HepG2 (cell line): ENCODE measurements at regions of chr3 and their contacts with region 1.

Region 1: GRCh38 chr3:65828706-65829105 is 210.0 kb downstream of the MAGI1 start:
- DNase-seq: no peak
- ATAC-seq: no peak
- H3K4me3 ChIP-seq: no peak overlapping the region
- H3K27ac ChIP-seq: no peak overlapping the region
- H3K4me1 ChIP-seq: peaks cover 23% of the 10 kb centered on the region
- H3K27me3 ChIP-seq: no peaks in the 10 kb centered on the region
- CTCF ChIP-seq: no peak
- EP300 ChIP-seq: no peak
- POLR2A ChIP-seq: no peak
- RAD21 ChIP-seq: no peak

Region 2: GRCh38 chr3:65785065-65785645 is 43.6 kb before region 1 on chr3:
- CTCF ChIA-PET with region 1: no interaction called
- POLR2A ChIA-PET with region 1: no interaction called
- in situ Hi-C with region 1: no loop called
- intact Hi-C with region 1: no loop called
- DNase-seq: peak; percentile 41
- ATAC-seq: peak; percentile 53; the same call in 1 of the 3 replicates
- H3K4me3 ChIP-seq: no peak overlapping the region
- H3K27ac ChIP-seq: no peak overlapping the region
- H3K4me1 ChIP-seq: no peaks in the 10 kb centered on the region
- H3K27me3 ChIP-seq: no peaks in the 10 kb centered on the region
- CTCF ChIP-seq: peak; percentile 68
- EP300 ChIP-seq: no peak
- POLR2A ChIP-seq: no peak
- RAD21 ChIP-seq: 0 out of 2 replicates have a peak, but pooled peaks have one; percentile 11

Region 3: GRCh38 chr3:65871305-65872141 is 42.8 kb after region 1 on chr3:
- CTCF ChIA-PET with region 1: no interaction called
- POLR2A ChIA-PET with region 1: no interaction called
- in situ Hi-C with region 1: no loop called
- intact Hi-C with region 1: loop called (anchors 5 kb)
- DNase-seq: peak; percentile 38
- ATAC-seq: peak; percentile 71
- H3K4me3 ChIP-seq: no peak overlapping the region
- H3K27ac ChIP-seq: peak overlapping the region; percentile 14
- H3K4me1 ChIP-seq: peaks cover 48% of the 10 kb centered on the region
- H3K27me3 ChIP-seq: no peaks in the 10 kb centered on the region
- CTCF ChIP-seq: no peak
- EP300 ChIP-seq: no peak
- POLR2A ChIP-seq: no peak
- RAD21 ChIP-seq: no peak